ENCODE measurements at regions of chr4 and their contacts with region 1.

Region 1: DNA sequence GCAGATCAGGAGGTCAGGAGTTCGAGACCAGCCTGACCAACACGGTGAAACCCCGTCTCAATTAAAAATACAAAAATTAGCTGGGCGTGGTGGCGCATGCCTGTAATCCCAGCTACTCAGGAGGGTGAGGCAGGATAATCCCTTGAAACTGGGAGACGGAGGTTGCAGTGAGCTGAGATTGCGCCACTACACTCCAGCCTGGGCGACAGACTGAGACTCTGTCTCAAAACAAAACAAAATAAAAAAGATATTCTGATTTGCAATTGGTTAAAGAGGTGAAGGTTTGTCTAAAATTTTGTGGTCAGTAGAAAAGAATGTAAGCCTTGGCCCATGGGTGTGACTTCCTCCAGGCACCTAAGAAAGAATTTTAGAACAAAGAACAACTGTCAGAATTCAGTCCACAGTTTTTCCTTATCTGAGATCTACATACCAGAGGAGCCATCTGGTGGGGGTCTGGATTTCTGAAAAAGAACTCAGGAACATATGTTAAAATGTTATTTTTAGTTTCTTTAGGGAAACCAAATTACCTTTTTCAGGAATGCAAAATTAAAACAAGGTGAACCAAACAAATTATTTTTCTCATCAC is 434.1 kb downstream of the ANKRD50 start:
- DNase-seq: peak; percentile 35 to 63
- H3K4me3 ChIP-seq: no peak overlapping the region
- H3K27ac ChIP-seq: no peak overlapping the region; the same call in 1 of the 2 replicates
- H3K4me1 ChIP-seq: peaks cover 5% of the 10 kb centered on the region; the same call in 1 of the 2 replicates
- H3K27me3 ChIP-seq: no peaks in the 10 kb centered on the region
- CTCF ChIP-seq: no peak

Region 2: GRCh38 chr4:124152132-124152531 is 126.3 kb before region 1 on chr4:
- CTCF ChIA-PET with region 1: no interaction called
- POLR2A ChIA-PET with region 1: no interaction called
- intact Hi-C with region 1: no loop called
- DNase-seq: no peak
- H3K4me3 ChIP-seq: no peak overlapping the region
- H3K27ac ChIP-seq: no peak overlapping the region
- H3K4me1 ChIP-seq: no peaks in the 10 kb centered on the region
- H3K27me3 ChIP-seq: no peaks in the 10 kb centered on the region
- CTCF ChIP-seq: no peak

Region 3: DNA sequence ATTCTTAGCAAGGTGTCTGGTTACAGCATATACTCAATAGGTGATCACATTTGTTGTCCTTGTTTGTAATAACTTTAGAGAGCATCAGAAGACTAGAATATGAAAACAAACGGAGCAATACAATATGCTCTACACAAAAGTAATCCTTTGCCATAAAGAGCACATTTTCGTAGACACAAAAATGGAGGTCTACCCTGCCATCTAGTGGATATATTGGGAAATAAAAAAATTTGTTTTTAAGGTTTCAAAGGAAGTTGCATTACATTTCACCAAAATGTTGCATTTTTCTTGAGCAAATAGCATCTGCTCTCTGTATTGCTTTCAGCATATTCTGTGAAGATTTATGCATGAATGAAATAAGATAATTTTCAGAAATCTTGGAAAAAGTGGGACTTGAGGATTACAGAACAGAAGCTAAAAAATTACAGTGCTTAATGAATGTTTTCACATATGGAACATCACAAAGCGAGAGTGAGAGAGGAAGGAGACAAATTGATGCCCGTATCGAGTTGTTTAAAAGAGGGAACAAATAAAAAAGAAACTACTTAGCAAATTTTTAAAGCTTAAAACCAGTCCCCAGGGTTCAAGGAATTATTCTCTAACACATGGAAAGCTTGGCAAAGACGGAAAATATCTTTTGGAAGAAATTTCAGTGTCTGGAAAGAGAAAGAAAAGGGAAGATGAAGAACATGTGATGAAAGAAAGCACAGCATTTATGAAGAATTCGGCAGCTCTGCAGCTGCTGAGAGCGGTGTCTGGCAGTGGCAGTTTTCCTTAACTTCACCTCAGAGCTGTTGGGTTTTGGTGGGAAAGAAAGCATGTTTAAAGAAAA is 44.1 kb after region 1 on chr4:
- CTCF ChIA-PET with region 1: no interaction called
- POLR2A ChIA-PET with region 1: no interaction called
- intact Hi-C with region 1: loop called (anchors 2 kb)
- DNase-seq: no peak
- H3K4me3 ChIP-seq: no peak overlapping the region
- H3K27ac ChIP-seq: no peak overlapping the region
- H3K4me1 ChIP-seq: no peaks in the 10 kb centered on the region
- H3K27me3 ChIP-seq: no peaks in the 10 kb centered on the region
- CTCF ChIP-seq: peak; percentile 82